Motor neuron (in vitro differentiated cells): ENCODE measurements at regions of chr18 and their contacts with region 1.

Region 1: DNA sequence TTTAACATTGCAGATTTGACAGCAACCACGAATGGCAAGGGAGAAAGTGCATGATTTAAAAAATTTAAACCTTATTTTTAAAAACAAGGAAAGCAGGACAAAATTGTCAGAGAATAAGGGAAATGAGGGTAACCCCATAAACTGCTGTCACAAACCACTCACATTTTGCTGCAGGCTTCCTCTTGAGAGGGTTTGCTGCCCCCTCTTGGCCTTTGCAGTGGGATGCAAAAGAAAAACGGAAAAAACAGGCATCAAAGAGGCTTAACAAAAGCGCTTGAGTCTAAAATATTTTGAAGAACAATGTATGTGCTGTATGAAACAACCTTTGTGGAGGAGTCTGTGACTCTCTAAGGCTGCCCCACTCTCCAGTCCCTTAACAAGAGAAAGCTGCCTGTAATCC is 91.6 kb downstream of the TMX3 start:
- ATAC-seq: peak in 7 of 8 experiments; percentile 36 to 63 (median 55)
- H3K4me3 ChIP-seq: no peak overlapping the region
- H3K27ac ChIP-seq: no peak overlapping the region
- H3K4me1 ChIP-seq: no peaks in the 10 kb centered on the region

Region 2: DNA sequence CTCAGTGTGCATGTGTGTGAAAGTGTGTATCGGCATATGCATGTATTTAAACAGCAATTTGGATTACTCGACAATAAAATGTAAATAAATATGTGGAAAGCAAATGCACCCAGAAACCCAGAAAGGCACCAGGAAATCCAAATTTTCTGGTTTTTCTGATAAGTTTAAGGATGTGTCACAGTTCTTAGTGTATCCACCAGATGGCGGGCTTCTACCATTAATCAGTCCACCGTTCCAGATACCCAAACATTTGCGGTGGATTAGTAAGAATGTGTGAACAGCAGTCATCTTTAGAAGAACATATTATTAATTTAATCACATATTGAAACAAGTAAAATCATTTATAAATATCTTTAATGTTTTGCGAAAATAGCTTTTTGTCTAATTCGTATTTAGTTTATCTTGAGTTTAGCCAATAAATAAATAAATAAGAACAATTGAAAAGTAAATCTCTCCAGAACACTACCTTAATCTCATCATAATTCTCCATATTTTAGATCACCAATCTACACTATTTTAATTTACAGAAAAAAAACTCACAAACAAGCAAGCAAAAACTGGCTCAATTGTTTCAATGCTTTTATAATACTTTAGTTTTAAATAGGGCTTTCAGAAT is 1405.7 kb before region 1 on chr18:
- in situ Hi-C with region 1: loop called in 1 of 9 experiments (anchors 25 kb)
- ATAC-seq: peak; percentile 50 to 74 (median 61)
- H3K4me3 ChIP-seq: no peak overlapping the region
- H3K27ac ChIP-seq: no peak overlapping the region
- H3K4me1 ChIP-seq: no peaks in the 10 kb centered on the region

Region 3: DNA sequence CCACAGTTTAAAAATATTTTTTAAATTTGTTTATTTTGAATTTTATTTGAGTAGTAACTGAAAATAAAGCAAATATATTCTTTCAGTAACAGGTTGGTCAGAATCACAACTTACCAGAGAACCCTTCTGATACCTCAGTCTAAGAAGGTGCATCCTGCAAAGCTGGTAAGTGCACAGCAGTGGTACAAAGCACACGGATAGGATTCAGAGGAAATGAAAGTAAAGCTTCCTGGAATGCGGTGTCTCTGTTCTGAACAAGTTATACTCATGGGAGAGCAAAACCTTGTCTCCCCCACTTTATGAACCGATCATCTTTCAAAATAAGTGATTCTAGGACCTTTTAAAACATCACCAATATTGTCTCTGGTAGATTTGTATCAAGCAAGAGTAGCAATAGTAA is 306.7 kb before region 1 on chr18:
- in situ Hi-C with region 1: loop called in 1 of 9 experiments (anchors 25 kb)
- ATAC-seq: peak in 3 of 8 experiments; percentile 75 to 81 (median 75)
- H3K4me3 ChIP-seq: no peak overlapping the region
- H3K27ac ChIP-seq: no peak overlapping the region
- H3K4me1 ChIP-seq: peaks cover 0 to 3% of the 10 kb centered on the region in 2 donors

Region 4: DNA sequence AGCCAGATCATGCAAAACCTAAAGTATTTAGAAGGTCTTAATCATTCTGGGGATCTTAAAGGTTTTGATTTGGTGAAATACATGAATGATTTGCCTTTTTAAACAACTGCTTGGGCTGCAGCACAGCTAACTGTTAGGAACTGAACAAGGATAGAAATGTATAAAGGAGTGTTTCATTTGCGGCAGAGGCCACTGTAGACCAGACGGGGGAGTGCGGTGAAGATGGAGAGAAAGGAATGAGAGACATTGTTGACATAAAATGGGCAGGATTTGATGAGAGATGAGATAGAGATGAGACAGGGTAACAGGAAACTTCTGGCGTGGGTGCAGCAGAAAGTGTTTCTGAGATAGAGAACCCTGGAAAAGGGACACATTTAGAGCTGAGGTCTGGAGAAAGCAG is 216.6 kb before region 1 on chr18:
- in situ Hi-C with region 1: loop called in 1 of 9 experiments (anchors 25 kb)
- ATAC-seq: peak in 2 of 8 experiments; percentile 51 to 67
- H3K4me3 ChIP-seq: no peak overlapping the region
- H3K27ac ChIP-seq: no peak overlapping the region
- H3K4me1 ChIP-seq: peaks cover 0 to 4% of the 10 kb centered on the region in 2 donors